CD14-positive monocyte (primary cell): ENCODE measurements at regions of chr19 and their contacts with region 1.

Region 1: GRCh38 chr19:7629347-7630054 is at the starts of genes PET100 and XAB2:
- DNase-seq: peak; percentile 98 to 99 (median 99)
- H3K4me3 ChIP-seq: peak within 1 kb of the TSS; percentile 83 to 96 (median 88)
- H3K4me3 Mint-ChIP-seq: peak within 1 kb of the TSS; percentile 95 to 96
- H3K27ac ChIP-seq: peak within 1 kb of the TSS; percentile 63 to 97
- H3K27ac Mint-ChIP-seq: peak within 1 kb of the TSS; percentile 97 to 100 (median 99)
- H3K4me1 ChIP-seq: peaks cover 19 to 28% of the 10 kb centered on the region in 2 donors
- H3K4me1 Mint-ChIP-seq: peaks cover 22% of the 10 kb centered on the region
- H3K27me3 ChIP-seq: no peaks in the 10 kb centered on the region
- H3K27me3 Mint-ChIP-seq: peaks cover 0 to 2% (median 0%) of the 10 kb centered on the region in 3 donors
- CTCF ChIP-seq: no peak
- polyA plus RNA-seq, gene PET100: 64.6 to 386 (median 300) TPM
- polyA plus RNA-seq, gene XAB2: 4.6 to 55.7 (median 8.8) TPM

Region 2: DNA sequence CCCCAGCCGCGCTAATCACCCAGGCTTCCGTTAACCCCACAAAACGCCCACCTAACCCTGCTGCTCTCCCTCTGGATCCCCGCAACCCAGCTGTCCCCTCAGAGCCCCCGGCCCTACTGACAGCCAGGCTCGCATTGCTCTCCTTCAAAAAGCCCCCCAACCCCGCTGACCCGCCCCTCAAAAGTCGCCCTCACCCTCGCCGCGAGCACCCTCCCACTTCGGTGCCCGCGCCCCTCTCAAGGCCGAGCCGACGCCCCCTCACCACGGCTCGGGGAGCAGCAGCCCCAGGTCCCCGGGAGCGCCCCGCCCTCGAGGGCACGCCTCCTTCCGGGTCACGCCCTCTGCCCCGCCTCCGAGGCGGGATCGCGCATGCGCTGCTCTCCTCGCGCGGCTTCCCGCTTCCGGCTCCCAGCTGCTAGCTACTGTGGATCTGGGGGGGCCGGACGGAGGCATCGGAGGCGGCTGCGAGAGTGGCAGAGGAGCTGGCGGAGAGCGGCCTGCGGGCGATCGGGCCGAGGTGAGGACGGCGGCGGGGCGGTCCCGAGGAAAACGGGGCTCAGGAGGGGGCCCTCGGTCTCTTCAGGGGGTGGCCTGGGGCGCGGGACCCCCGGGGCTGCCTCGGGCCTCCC is 234.7 kb before region 1 on chr19:
- intact Hi-C with region 1: loop called in 1 of 2 experiments (anchors 10 kb)
- DNase-seq: peak; percentile 81 to 86 (median 84)
- H3K4me3 ChIP-seq: peak overlapping the region; percentile 81 to 84 (median 83)
- H3K4me3 Mint-ChIP-seq: peak overlapping the region; percentile 87 to 93
- H3K27ac ChIP-seq: peak overlapping the region; percentile 28 to 76
- H3K27ac Mint-ChIP-seq: peak overlapping the region; percentile 23 to 93 (median 86)
- H3K4me1 ChIP-seq: peaks cover 31 to 37% of the 10 kb centered on the region in 2 donors
- H3K4me1 Mint-ChIP-seq: peaks cover 38% of the 10 kb centered on the region
- H3K27me3 ChIP-seq: no peaks in the 10 kb centered on the region
- H3K27me3 Mint-ChIP-seq: no peaks in the 10 kb centered on the region
- CTCF ChIP-seq: no peak

Region 3: DNA sequence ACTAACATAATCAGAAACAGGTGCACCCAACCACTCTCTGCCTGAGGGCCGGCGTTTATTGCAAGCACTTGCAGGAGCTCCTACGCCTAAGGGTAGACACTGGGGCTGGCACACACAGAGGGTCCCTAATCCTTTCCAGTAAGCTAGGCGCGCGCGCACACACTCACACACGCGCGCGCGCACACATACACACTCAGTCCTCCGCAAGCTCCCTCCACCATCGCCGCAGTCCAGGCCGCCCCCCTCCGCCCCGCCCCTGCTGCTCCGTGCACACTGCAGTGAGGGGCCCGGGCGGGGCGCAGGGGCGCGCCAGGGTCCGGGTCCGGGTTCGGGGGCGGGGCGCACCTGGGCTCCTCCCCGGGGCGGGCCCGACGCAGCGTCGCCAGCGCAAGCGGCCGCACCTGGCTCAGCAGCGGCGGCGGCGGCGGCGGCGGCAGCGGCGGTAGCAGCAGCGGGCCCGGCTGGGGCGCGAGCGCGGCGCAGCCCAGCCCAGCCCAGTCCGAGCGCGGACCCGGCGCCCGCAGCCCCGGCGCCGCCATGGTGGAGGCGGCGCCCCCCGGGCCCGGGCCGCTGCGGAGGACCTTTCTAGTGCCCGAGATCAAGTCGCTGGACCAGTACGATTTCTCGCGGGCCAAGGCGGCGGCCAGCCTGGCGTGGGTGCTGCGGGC is 33.9 kb before region 1 on chr19 and contains the start of gene CAMSAP3:
- intact Hi-C with region 1: no loop called
- DNase-seq: no peak
- H3K4me3 ChIP-seq: peak within 1 kb of the TSS in 1 of 3 experiments; percentile 60
- H3K4me3 Mint-ChIP-seq: peak within 1 kb of the TSS; percentile 71 to 82
- H3K27ac ChIP-seq: no peak within 1 kb of the TSS
- H3K27ac Mint-ChIP-seq: peak within 1 kb of the TSS in 1 of 7 donors; percentile 9
- H3K4me1 ChIP-seq: peaks cover 4 to 6% of the 10 kb centered on the region in 2 donors
- H3K4me1 Mint-ChIP-seq: peaks cover 6% of the 10 kb centered on the region
- H3K27me3 ChIP-seq: peaks cover 33 to 51% of the 10 kb centered on the region in 2 donors
- H3K27me3 Mint-ChIP-seq: peaks cover 54 to 66% (median 63%) of the 10 kb centered on the region in 3 donors
- CTCF ChIP-seq: no peak
- polyA plus RNA-seq, gene CAMSAP3: 0.05 TPM in 1 of 3 donors, not detected in the others

Region 4: DNA sequence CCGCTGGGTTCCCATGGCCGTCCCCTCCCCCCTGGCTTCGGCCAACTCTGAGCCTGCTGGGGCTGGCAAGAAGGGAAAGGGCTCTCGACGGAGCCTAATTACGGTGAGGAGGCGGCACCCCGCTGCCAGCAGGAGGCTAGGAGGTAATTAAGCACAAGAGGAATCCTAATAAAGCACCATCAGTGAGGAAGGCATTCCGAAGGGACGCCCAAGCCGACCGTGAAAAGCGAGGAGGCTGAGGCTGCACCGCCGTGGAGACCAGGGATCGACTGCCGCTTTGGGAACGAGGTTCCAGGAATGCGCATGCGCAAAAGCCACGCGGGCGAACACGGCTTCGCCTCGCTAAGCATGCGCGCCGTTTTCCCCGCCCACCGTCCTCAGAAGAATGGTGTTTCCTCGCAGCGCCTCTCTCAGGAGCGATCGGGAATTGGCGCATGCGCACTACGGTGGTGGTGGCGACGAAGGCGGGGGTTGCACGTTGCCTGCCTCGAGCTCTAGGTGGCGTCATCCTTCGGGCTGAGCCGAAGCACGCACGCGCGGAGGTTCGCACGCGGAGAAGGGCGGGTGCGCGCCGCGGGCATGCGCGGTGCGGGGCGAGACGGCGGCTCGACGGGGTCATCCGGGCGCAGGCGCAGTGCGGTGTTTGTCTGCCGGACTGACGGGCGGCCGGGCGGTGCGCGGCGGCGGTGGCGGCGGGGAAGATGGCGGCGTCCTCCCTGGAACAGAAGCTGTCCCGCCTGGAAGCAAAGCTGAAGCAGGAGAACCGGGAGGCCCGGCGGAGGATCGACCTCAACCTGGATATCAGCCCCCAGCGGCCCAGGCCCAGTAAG is 274.0 kb after region 1 on chr19 and contains the start of gene MAP2K7:
- intact Hi-C with region 1: loop called in 1 of 2 experiments (anchors 10 kb)
- DNase-seq: peak; percentile 99 to 100 (median 100)
- H3K4me3 ChIP-seq: peak within 1 kb of the TSS; percentile 61 to 88 (median 85)
- H3K4me3 Mint-ChIP-seq: peak within 1 kb of the TSS; percentile 81 to 87
- H3K27ac ChIP-seq: peak within 1 kb of the TSS; percentile 61 to 78
- H3K27ac Mint-ChIP-seq: peak within 1 kb of the TSS; percentile 85 to 94 (median 88)
- H3K4me1 ChIP-seq: peaks cover 19 to 26% of the 10 kb centered on the region in 2 donors
- H3K4me1 Mint-ChIP-seq: peaks cover 24% of the 10 kb centered on the region
- H3K27me3 ChIP-seq: no peaks in the 10 kb centered on the region
- H3K27me3 Mint-ChIP-seq: peaks cover 0 to 3% (median 3%) of the 10 kb centered on the region in 3 donors
- CTCF ChIP-seq: peak; percentile 45
- polyA plus RNA-seq, gene MAP2K7: 0.92 to 39.5 (median 1.5) TPM